Left colon (tissue), 2 donors: ENCODE measurements at regions of chr10 and their contacts with region 1.

Region 1: GRCh38 chr10:72109632-72110173 is 21.4 kb upstream of the SPOCK2 start:
- DNase-seq: no peak
- ATAC-seq: peak; percentile 68

Region 2: DNA sequence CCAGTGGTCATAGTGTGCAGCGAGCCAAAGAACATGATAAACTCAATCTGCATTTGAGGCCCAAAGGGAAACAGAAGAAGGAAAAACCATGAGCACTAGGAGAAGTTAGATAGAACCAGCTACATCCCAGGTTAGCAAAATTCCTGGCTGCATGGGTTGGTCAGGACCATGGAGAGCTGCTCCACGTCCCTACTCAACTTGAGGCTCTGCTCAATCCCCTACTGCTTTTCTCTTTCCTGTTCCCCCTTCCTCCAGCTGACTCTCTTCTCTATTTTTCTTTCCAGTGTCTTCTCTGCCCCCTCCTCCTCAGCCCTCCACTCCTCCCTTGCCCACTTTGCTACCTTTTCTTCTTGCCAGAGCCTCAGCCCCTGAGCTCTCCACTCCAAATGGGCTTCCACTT is 314.5 kb before region 1 on chr10:
- intact Hi-C with region 1: no loop called
- DNase-seq: no peak
- ATAC-seq: peak; percentile 35

Region 3: GRCh38 chr10:72204296-72204695 is 94.6 kb after region 1 on chr10:
- intact Hi-C with region 1: loop called in 1 of 2 experiments (anchors 5 kb)
- DNase-seq: no peak
- ATAC-seq: no peak